Right cardiac atrium (tissue), 5 donors: ENCODE measurements at regions of chr3 and their contacts with region 1.

Region 1: DNA sequence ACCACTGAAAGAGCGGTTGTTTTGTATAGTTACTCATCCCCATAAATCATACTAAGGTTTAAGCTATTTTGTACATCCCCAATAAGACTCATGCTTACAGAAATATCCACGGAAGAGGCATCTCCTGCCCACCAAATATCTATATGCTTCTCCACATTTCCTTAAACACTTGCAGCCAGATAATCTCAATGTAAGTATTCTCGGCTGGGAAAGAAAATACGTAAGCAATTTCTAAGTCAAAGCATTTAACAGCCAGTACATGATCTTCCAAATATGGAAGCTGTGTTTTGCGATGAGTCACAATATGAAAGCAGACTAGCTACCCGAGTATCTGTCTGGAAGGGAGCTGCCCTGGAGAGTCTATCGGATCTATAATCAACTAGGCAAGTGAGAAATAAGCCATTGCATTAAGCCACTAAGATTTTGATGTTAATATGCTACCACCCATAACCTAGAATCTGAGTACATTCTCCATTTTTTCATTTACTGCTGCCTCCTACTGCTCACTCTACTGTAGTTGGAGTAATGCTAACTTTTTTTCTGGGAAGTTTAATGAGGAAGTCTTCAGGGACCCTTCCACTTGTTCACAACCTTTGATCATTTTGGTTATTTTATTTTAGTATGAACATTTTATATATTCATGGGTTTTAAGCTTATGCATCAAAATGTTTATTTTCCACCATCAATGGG is 26.9 kb upstream of the ZMAT3 start:
- DNase-seq: no peak
- ATAC-seq: no peak
- H3K4me3 ChIP-seq: no peak overlapping the region
- H3K27ac ChIP-seq: no peak overlapping the region
- H3K4me1 ChIP-seq: peaks cover 2% of the 10 kb centered on the region
- H3K27me3 ChIP-seq: no peaks in the 10 kb centered on the region

Region 2: DNA sequence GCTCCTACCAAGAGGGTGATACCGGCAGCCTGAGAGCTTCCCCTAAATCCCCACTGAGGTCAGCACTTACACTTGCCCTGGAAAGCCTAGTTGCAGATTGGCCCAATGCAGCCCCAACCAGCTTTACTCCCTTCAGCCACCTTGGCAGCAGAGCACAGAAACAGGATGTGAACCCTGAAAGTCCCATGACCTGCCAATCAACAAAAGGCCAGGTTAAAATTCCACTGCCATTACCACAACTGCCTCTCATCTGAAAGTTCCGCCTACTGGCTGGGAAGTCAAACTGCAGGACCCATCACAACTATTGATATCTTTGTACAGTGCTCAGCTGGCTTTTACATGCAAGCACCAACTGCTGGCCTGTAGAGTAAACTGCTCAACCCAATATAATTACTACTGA is 183.2 kb before region 1 on chr3:
- intact Hi-C with region 1: no loop called
- DNase-seq: no peak
- ATAC-seq: no peak
- H3K4me3 ChIP-seq: no peak overlapping the region
- H3K27ac ChIP-seq: no peak overlapping the region
- H3K4me1 ChIP-seq: no peaks in the 10 kb centered on the region
- H3K27me3 ChIP-seq: no peaks in the 10 kb centered on the region

Region 3: GRCh38 chr3:179015551-179016020 is 82.9 kb before region 1 on chr3:
- intact Hi-C with region 1: loop called in 1 of 4 experiments (anchors 10 kb)
- DNase-seq: no peak
- ATAC-seq: peak; percentile 74 to 81
- H3K4me3 ChIP-seq: no peak overlapping the region
- H3K27ac ChIP-seq: no peak overlapping the region
- H3K4me1 ChIP-seq: peaks cover under 1% of the 10 kb centered on the region
- H3K27me3 ChIP-seq: no peaks in the 10 kb centered on the region